ENCODE measurements at regions of chr6 and their contacts with region 1.

Region 1: DNA sequence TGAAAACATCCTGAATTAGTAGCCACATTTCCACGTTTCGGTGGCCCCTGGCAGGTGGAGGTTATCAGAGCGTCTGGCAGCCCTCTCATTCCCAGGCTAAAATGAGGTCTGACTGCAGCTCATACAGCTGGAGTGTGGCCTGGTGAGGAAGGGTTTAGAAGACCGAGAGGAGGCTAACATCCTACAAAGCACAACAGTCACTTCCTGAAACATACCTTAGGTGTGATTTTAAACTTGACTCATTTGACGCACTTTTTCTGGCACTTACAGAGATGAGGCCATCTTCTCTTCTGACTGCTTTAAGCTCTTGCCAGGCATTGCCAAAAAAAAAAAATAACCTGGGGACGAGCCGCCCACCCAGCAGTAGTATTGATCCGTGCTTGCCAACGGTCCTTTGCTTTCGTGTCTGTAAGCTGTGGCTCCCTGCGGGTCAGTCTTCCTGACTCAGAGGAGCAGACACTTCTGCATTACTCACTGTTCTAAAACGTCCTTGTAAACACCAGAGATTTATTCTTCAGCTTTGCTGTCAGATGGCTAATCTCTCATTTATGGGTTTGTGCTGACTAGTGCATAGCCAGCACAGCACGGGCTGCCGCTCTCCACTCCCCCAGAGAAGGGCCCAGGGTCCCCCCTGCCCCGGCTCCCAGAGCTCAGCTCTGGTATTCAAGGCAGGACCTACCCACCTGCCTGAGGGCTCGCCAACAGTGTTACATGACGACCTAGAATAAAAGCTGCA is 78.4 kb upstream of the FRMD1 start:
- DNase-seq: no peak
- ATAC-seq: peak in 1 of 4 donors; percentile 35
- H3K4me3 ChIP-seq: no peak overlapping the region
- H3K27ac ChIP-seq: no peak overlapping the region
- H3K4me1 ChIP-seq: no peaks in the 10 kb centered on the region
- H3K27me3 ChIP-seq: no peaks in the 10 kb centered on the region
- CTCF ChIP-seq: no peak
- POLR2A ChIP-seq: no peak

Region 2: GRCh38 chr6:168342641-168343040 is 185.2 kb after region 1 on chr6:
- intact Hi-C with region 1: loop called in 1 of 2 experiments (anchors 10 kb)
- DNase-seq: no peak
- ATAC-seq: no peak
- H3K4me3 ChIP-seq: no peak overlapping the region
- H3K27ac ChIP-seq: no peak overlapping the region
- H3K4me1 ChIP-seq: no peaks in the 10 kb centered on the region
- H3K27me3 ChIP-seq: no peaks in the 10 kb centered on the region
- CTCF ChIP-seq: no peak
- POLR2A ChIP-seq: no peak

Region 3: DNA sequence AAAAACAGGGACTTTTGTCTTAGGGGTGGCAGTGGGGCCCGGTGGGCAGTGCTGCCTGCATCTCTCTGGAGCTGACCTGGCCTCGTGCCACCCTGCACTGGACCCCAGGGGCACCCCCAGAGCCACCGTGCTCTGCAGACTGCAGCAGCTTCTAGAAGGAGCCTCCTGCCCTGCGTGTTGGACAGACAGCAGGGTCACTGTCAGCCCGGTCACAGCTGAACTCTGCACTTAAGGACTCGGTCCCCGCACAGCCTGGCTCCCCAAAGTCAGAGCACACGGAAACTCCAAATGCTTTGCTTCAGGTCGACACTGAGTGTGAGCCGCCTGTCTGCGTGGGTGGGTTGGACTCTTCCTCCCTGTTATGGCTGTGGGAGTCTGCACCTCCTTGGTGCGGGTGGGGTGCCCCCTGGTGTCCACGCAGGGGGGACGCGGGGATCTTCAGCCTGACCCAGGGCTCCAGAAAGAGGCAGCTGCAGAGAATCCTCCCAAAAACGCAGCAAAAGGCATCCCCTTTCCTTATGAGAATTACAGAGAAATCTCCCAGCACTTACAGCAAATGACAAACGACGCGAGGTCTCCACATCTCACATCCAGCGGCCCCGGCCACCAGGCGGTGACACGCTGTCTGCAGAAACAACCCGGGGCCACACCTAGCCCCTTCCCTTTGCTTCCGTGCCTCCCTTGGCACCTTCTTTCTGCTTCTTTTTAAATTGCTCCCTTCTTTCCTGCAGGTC is 198.4 kb after region 1 on chr6:
- intact Hi-C with region 1: loop called in 1 of 2 experiments (anchors 10 kb)
- DNase-seq: peak; percentile 75 to 79 (median 78)
- ATAC-seq: peak; percentile 100
- H3K4me3 ChIP-seq: peak overlapping the region in 1 of 3 donors; percentile 24
- H3K27ac ChIP-seq: no peak overlapping the region
- H3K4me1 ChIP-seq: no peaks in the 10 kb centered on the region
- H3K27me3 ChIP-seq: no peaks in the 10 kb centered on the region
- CTCF ChIP-seq: peak; percentile 82 to 94 (median 86)
- POLR2A ChIP-seq: no peak

Measured in right lobe of liver (tissue), 6 donors.